ENCODE measurements at regions of chr12 and their contacts with region 1.

Region 1: GRCh38 chr12:58443273-58443980 is 476.9 kb downstream of the LRIG3 start:
- DNase-seq: peak; percentile 17
- H3K4me3 Mint-ChIP-seq: no peak overlapping the region
- H3K27ac Mint-ChIP-seq: no peak overlapping the region
- H3K4me1 Mint-ChIP-seq: no peaks in the 10 kb centered on the region
- H3K27me3 Mint-ChIP-seq: peaks cover 2% of the 10 kb centered on the region

Region 2: GRCh38 chr12:58186914-58187313 is 256.5 kb before region 1 on chr12:
- CTCF ChIA-PET with region 1: no interaction called
- POLR2A ChIA-PET with region 1: no interaction called
- intact Hi-C with region 1: no loop called
- DNase-seq: no peak
- H3K4me3 Mint-ChIP-seq: no peak overlapping the region
- H3K27ac Mint-ChIP-seq: no peak overlapping the region
- H3K4me1 Mint-ChIP-seq: no peaks in the 10 kb centered on the region
- H3K27me3 Mint-ChIP-seq: peaks cover 4% of the 10 kb centered on the region

Region 3: GRCh38 chr12:58346032-58346632 is 97.3 kb before region 1 on chr12:
- CTCF ChIA-PET with region 1: interaction called, 9 read pairs
- POLR2A ChIA-PET with region 1: no interaction called
- intact Hi-C with region 1: loop called (anchors 1 kb)
- DNase-seq: no peak
- H3K4me3 Mint-ChIP-seq: no peak overlapping the region
- H3K27ac Mint-ChIP-seq: no peak overlapping the region
- H3K4me1 Mint-ChIP-seq: no peaks in the 10 kb centered on the region
- H3K27me3 Mint-ChIP-seq: peaks cover 11% of the 10 kb centered on the region

Region 4: DNA sequence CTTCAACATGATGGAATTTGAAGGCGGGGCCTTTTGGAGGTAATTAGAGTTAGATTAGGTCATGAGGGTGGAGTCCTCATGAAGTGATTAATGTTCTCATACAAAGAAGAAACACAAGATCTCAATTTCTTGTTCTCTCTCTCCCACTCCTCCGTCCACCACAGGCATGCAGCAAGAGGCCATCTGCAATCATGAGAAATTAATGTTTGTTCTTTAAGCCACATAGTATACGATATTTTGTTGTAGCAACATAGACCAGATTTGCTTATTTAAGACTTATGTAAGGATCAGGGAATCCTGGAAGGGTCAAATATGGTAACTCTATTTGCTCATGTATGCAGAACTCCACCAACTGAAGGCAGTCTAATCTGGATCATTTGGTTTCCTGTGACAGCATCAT is 47.9 kb after region 1 on chr12:
- CTCF ChIA-PET with region 1: no interaction called
- POLR2A ChIA-PET with region 1: no interaction called
- intact Hi-C with region 1: no loop called
- DNase-seq: no peak
- H3K4me3 Mint-ChIP-seq: no peak overlapping the region
- H3K27ac Mint-ChIP-seq: no peak overlapping the region
- H3K4me1 Mint-ChIP-seq: no peaks in the 10 kb centered on the region
- H3K27me3 Mint-ChIP-seq: no peaks in the 10 kb centered on the region